Naive thymus-derived CD4-positive, alpha-beta T cell (primary cell): ENCODE measurements at regions of chr6 and their contacts with region 1.

Region 1: GRCh38 chr6:156776840-156777576 is at the start of gene ARID1B:
- DNase-seq: peak; percentile 67 to 86 (median 80)
- ATAC-seq: peak; percentile 74
- H3K4me3 ChIP-seq: peak within 1 kb of the TSS; percentile 79
- H3K4me3 Mint-ChIP-seq: peak within 1 kb of the TSS; percentile 87 to 100 (median 96)
- H3K27ac ChIP-seq: peak within 1 kb of the TSS; percentile 81
- H3K27ac Mint-ChIP-seq: peak within 1 kb of the TSS; percentile 94 to 99 (median 99)
- H3K4me1 ChIP-seq: peaks cover 4 to 10% of the 10 kb centered on the region in 2 donors
- H3K4me1 Mint-ChIP-seq: peaks cover 11 to 44% (median 38%) of the 10 kb centered on the region in 7 donors
- H3K27me3 ChIP-seq: no peaks in the 10 kb centered on the region
- H3K27me3 Mint-ChIP-seq: peaks cover 0 to 4% (median 0%) of the 10 kb centered on the region in 5 donors
- total RNA-seq, gene ARID1B: 88.8 to 164 (median 141) TPM

Region 2: DNA sequence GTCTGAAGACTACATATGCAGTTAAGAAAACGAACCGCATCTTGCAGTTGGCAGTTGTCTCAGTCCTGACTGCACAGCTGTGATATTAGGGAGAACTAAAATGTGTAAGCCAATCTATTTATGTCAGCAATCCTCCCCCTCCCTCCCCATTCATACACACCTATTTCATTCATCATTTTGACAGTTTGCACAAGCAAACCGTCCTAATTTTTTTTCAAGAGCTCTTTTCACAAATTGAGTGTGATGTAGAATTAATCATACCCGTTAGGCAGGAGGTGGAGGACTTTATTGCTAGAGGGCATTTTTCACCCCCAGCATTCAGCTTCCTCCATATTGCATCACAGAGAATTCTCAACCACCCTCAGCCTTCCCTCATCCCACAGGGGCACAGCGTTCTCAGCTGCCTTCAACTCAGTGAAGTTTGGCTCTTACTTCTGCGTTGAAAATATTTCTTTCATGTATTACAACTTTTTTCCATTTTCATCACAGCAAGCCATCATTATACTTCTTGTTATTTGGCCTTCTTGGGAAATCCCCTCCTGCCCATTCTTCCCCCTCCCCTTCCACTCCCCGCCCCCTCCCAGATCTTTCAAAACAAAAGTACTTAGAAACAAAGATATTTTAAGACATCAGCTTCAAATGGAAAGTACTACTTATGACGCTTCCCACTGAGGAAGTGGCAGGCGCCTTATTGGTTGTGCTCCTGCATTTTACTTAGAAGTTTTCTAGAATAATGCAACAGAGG is 1358.8 kb before region 1 on chr6:
- CTCF ChIA-PET with region 1: no interaction called
- POLR2A ChIA-PET with region 1: no interaction called
- intact Hi-C with region 1: loop called (anchors 2 to 5 kb)
- DNase-seq: peak; percentile 9 to 87 (median 68)
- ATAC-seq: peak; percentile 89
- H3K4me3 ChIP-seq: peak overlapping the region; percentile 44
- H3K4me3 Mint-ChIP-seq: peak overlapping the region; percentile 77 to 89 (median 84)
- H3K27ac ChIP-seq: peak overlapping the region; percentile 84
- H3K27ac Mint-ChIP-seq: peak overlapping the region; percentile 93 to 99 (median 97)
- H3K4me1 ChIP-seq: peaks cover 6 to 15% of the 10 kb centered on the region in 2 donors
- H3K4me1 Mint-ChIP-seq: peaks cover 22 to 50% (median 38%) of the 10 kb centered on the region in 7 donors
- H3K27me3 ChIP-seq: no peaks in the 10 kb centered on the region
- H3K27me3 Mint-ChIP-seq: no peaks in the 10 kb centered on the region

Region 3: GRCh38 chr6:156686995-156687788 is 89.8 kb before region 1 on chr6:
- CTCF ChIA-PET with region 1: interaction called, 3 read pairs
- POLR2A ChIA-PET with region 1: interaction called, 122 read pairs
- intact Hi-C with region 1: loop called (anchors 1 kb)
- DNase-seq: peak in 8 of 9 donors; percentile 77 to 91 (median 87)
- ATAC-seq: peak; percentile 93
- H3K4me3 ChIP-seq: peak overlapping the region; percentile 89
- H3K4me3 Mint-ChIP-seq: peak overlapping the region; percentile 81 to 96 (median 90)
- H3K27ac ChIP-seq: peak overlapping the region; percentile 100
- H3K27ac Mint-ChIP-seq: peak overlapping the region; percentile 87 to 99 (median 95)
- H3K4me1 ChIP-seq: peaks cover 4 to 17% of the 10 kb centered on the region in 2 donors
- H3K4me1 Mint-ChIP-seq: peaks cover 10 to 28% (median 20%) of the 10 kb centered on the region in 7 donors
- H3K27me3 ChIP-seq: no peaks in the 10 kb centered on the region
- H3K27me3 Mint-ChIP-seq: peaks cover 0 to 27% (median 0%) of the 10 kb centered on the region in 5 donors

Region 4: DNA sequence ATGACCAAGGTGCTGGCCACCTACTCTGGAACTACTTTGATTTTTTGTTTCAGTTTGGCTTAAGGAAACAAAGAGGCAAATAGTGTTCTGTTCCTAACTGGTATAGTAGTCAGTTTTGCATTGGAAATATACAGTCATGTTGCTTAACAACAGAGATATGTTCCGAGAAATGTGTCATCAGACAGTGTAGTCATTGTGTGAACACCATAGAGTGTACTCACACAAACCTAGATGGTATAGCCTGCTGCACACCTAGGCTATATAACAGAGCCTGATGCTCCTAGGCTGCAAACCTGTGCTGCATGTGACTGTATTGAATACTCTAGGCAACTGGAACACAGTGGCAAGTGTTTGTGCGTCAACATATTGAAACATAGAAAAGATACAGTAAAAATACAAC is 80.6 kb after region 1 on chr6:
- CTCF ChIA-PET with region 1: no interaction called
- POLR2A ChIA-PET with region 1: interaction called, 4 read pairs
- intact Hi-C with region 1: loop called in 1 of 2 experiments (anchors 5 kb)
- DNase-seq: peak in 1 of 9 donors; percentile 28
- ATAC-seq: peak; percentile 36
- H3K4me3 ChIP-seq: no peak overlapping the region
- H3K4me3 Mint-ChIP-seq: peak overlapping the region in 2 of 10 donors; percentile 6 to 31
- H3K27ac ChIP-seq: no peak overlapping the region
- H3K27ac Mint-ChIP-seq: peak overlapping the region in 3 of 9 donors; percentile 0 to 22 (median 7)
- H3K4me1 ChIP-seq: peaks cover 0 to 42% of the 10 kb centered on the region in 2 donors
- H3K4me1 Mint-ChIP-seq: peaks cover 51 to 95% (median 80%) of the 10 kb centered on the region in 7 donors
- H3K27me3 ChIP-seq: no peaks in the 10 kb centered on the region
- H3K27me3 Mint-ChIP-seq: no peaks in the 10 kb centered on the region

Region 5: DNA sequence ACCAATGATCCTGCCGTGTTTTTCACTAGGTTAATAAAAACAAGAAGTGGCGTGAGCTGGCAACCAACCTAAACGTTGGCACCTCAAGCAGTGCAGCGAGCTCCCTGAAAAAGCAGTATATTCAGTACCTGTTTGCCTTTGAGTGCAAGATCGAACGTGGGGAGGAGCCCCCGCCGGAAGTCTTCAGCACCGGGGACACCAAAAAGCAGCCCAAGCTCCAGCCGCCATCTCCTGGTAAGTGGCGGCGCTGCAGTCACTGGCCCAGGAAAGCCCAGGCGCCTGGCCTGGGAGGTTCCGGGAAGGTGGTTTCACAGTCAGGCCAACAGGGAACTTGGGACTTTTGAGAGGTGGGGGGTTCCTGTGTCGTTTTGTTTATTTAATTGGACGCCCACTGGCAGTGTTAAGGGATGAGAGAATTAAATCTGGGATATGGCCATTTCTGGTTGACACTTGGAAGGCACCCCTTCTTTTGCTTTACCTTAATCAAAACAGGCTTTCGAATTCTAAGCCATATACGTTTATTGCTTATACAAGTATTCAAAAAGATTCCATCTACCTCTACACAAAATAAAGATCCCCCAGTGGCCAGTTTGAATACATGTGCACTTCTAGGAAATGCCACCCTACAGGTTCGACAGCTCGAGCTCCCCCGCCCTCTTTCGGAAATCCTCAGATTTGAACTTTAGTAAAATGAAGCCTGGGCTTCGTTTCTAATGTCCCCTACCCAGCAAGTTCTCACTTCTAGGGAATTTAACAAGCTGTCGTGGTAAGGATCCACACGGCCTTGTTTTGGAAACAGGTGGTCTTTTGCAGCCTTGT is 407.4 kb after region 1 on chr6:
- CTCF ChIA-PET with region 1: no interaction called
- POLR2A ChIA-PET with region 1: no interaction called
- intact Hi-C with region 1: loop called (anchors 2 to 5 kb)
- DNase-seq: peak; percentile 33 to 66 (median 58)
- ATAC-seq: peak; percentile 80
- H3K4me3 ChIP-seq: no peak overlapping the region
- H3K4me3 Mint-ChIP-seq: peak overlapping the region in 1 of 10 donors; percentile 27
- H3K27ac ChIP-seq: no peak overlapping the region
- H3K27ac Mint-ChIP-seq: peak overlapping the region in 6 of 9 donors; percentile 33 to 55 (median 48)
- H3K4me1 ChIP-seq: peaks cover 0 to 7% of the 10 kb centered on the region in 2 donors
- H3K4me1 Mint-ChIP-seq: peaks cover 11 to 32% (median 22%) of the 10 kb centered on the region in 7 donors
- H3K27me3 ChIP-seq: no peaks in the 10 kb centered on the region
- H3K27me3 Mint-ChIP-seq: no peaks in the 10 kb centered on the region

Region 6: DNA sequence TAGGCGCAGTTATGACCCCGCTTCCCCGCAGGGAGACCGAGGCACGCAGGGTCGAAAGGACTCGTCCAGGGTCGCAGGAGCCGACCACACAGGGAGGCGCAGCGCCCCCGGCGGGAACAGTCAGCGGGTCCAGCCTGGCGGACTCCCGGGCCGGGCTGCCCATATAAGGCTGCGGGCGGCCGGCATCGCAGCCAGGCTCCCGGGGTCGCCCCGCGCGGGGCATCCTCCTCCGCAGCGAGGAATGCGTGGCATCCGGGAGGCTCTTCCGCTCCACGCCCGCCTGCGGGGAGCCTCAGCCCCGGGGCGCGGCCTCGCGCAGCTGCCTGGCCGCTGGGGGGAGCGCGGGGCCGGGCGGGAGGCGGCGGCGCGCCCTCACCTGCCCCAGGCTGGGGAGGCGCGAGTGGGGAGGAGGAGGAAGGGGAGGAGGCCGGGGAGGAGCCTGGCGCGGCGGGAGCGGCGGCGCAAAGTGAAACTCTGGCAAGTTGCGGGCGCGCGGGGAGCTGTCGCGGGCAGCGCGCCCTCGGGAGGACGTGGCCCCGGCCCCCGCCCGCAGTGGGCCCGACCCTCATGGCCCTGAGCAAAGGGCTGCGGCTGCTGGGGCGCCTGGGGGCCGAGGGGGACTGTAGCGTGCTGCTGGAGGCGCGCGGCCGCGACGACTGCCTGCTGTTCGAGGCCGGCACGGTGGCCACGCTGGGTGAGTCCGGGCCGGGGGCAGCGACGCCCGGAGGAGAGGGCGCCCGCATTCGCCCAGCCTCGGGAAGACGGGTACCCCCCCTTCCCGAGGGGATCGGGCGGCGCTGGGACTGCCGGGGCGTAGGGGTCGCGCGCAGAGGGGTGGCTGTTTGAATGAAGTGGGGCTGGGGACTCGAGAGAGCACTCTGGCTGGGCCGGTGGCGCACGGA is 1204.6 kb after region 1 on chr6 and contains the start of gene SYNJ2:
- CTCF ChIA-PET with region 1: no interaction called
- POLR2A ChIA-PET with region 1: no interaction called
- intact Hi-C with region 1: loop called in 1 of 2 experiments (anchors 5 kb)
- DNase-seq: peak; percentile 73 to 89 (median 87)
- ATAC-seq: peak; percentile 96
- H3K4me3 ChIP-seq: peak within 1 kb of the TSS; percentile 81
- H3K4me3 Mint-ChIP-seq: peak within 1 kb of the TSS; percentile 75 to 94 (median 84)
- H3K27ac ChIP-seq: peak within 1 kb of the TSS; percentile 83
- H3K27ac Mint-ChIP-seq: peak within 1 kb of the TSS; percentile 78 to 95 (median 88)
- H3K4me1 ChIP-seq: peaks cover 27 to 38% of the 10 kb centered on the region in 2 donors
- H3K4me1 Mint-ChIP-seq: peaks cover 26 to 65% (median 55%) of the 10 kb centered on the region in 7 donors
- H3K27me3 ChIP-seq: no peaks in the 10 kb centered on the region
- H3K27me3 Mint-ChIP-seq: no peaks in the 10 kb centered on the region
- total RNA-seq, gene SYNJ2: 22.4 to 36.6 (median 22.5) TPM